Caco-2 (cell line): ENCODE measurements at regions of chr15 and their contacts with region 1.

Region 1: GRCh38 chr15:77907824-77908751 is 169.4 kb downstream of the TBC1D2B start:
- DNase-seq: peak; percentile 77 to 82
- H3K4me3 ChIP-seq: no peak overlapping the region
- H3K4me3 Mint-ChIP-seq: no peak overlapping the region
- H3K27ac Mint-ChIP-seq: no peak overlapping the region
- H3K4me1 ChIP-seq: 0 out of 2 replicates have a peak, but pooled peaks cover 3% of the 10 kb centered on the region
- H3K4me1 Mint-ChIP-seq: no peaks in the 10 kb centered on the region
- H3K27me3 ChIP-seq: no peaks in the 10 kb centered on the region
- H3K27me3 Mint-ChIP-seq: peaks cover 10% of the 10 kb centered on the region
- CTCF ChIP-seq: peak; percentile 54 to 74

Region 2: DNA sequence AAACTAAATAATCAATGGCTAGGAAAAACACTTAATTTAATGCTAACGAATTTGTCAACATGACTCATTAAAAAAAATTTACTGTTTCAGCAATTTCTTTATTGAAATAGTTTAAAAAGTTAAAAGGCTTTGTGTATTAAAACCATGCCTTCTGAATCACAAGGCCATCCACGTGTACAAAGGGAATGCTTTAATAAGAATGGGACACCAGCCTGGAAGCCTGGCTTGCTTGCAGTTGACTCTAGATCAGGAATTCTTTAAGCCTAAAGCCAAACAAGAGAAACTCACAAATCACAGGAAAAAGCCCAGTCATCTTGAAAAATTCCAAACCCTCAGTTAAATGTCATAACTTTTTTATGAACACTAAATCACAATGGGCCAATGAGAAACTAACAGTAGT is 625.8 kb before region 1 on chr15:
- CTCF ChIA-PET with region 1: no interaction called
- POLR2A ChIA-PET with region 1: no interaction called
- intact Hi-C with region 1: no loop called
- DNase-seq: no peak
- H3K4me3 ChIP-seq: no peak overlapping the region
- H3K4me3 Mint-ChIP-seq: no peak overlapping the region
- H3K27ac Mint-ChIP-seq: no peak overlapping the region
- H3K4me1 ChIP-seq: no peaks in the 10 kb centered on the region; the same call in 1 of the 2 replicates
- H3K4me1 Mint-ChIP-seq: no peaks in the 10 kb centered on the region
- H3K27me3 ChIP-seq: no peaks in the 10 kb centered on the region
- H3K27me3 Mint-ChIP-seq: no peaks in the 10 kb centered on the region
- CTCF ChIP-seq: no peak

Region 3: DNA sequence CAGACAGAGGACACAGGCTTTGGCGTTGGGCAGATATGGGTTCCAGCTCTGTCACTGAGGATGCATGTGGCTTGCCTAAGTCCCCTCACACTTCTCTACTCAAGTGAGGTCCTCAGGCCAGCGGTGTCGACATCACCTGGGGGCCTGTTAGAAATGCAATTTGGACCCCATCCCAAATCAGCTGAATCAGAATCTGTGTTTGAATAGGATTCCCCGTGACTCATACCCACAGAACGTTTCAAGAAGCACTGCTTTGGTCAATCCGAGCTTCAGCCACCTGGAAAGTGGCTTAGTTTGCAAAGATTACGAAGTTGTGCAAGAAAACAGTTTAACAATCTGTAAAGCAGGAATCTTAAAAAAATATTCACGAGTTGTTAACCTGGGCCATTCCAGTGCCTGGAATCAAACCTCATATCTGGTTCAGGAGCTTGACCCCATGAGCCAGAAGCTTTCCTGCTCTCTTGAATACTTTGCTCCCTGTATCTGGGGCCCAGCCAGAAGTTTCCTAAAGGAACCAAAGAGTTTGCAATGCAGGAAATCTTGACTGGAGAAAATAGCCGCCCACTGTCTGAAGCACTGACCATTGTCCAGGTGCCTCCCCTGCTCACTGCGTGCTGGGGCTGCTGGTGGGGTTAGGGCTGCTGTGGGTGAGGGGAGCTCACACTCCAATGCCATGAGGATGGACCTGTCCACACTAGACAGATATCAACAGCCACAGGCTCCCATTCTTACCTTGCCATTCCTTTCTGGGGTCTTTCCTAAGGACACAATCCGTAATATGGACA is 66.9 kb before region 1 on chr15:
- CTCF ChIA-PET with region 1: interaction called, 10 read pairs
- POLR2A ChIA-PET with region 1: no interaction called
- intact Hi-C with region 1: no loop called
- DNase-seq: no peak
- H3K4me3 ChIP-seq: no peak overlapping the region
- H3K4me3 Mint-ChIP-seq: no peak overlapping the region
- H3K27ac Mint-ChIP-seq: no peak overlapping the region
- H3K4me1 ChIP-seq: no peaks in the 10 kb centered on the region
- H3K4me1 Mint-ChIP-seq: no peaks in the 10 kb centered on the region
- H3K27me3 ChIP-seq: no peaks in the 10 kb centered on the region; the same call in 1 of the 2 replicates
- H3K27me3 Mint-ChIP-seq: peaks cover 9% of the 10 kb centered on the region
- CTCF ChIP-seq: no peak

Region 4: DNA sequence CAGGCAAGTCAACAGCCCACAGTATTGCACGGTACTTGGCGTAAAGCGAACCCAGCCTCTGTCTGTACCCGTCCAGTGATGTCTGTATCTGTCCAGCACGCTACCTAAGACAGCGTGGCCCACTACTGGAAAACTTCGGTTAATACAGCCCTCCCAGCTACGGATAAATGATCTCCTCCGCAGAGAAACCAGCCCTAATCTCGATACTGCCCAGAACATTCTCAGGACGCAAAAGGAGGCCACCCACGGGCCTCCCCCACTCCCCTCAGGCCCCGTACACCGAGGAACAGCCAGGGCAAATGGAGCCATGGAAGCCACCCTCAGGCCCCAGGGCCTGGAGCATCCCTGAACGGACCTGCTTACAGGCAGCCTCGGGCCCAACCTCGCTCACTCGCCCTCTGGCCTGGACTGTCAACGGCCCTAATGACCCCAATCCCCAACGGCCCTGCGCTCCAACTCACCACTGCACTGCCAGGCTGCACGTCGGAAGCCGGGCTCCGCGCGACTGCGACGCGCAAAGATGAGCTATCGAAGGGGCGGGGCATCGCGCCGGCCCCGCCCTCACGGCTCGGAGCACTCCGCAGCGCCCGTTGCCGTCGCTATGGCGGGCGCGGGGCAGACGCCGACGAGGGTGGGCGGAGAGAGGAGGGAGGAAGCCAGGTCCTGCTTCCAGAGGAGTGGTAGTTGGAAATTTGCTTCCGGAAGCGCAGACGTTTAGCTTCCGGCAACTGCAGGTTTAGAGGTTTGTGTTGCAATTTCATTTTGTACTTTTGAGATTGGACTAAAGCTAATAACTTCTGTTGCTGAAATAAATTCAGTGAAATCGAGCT is 391.2 kb after region 1 on chr15 and contains the start of gene SKIC8:
- CTCF ChIA-PET with region 1: no interaction called
- POLR2A ChIA-PET with region 1: no interaction called
- intact Hi-C with region 1: no loop called
- DNase-seq: peak; percentile 94
- H3K4me3 ChIP-seq: peak within 1 kb of the TSS; percentile 86
- H3K4me3 Mint-ChIP-seq: peak within 1 kb of the TSS; percentile 100
- H3K27ac Mint-ChIP-seq: peak within 1 kb of the TSS; percentile 98
- H3K4me1 ChIP-seq: 0 out of 2 replicates have a peak, but pooled peaks cover 4% of the 10 kb centered on the region
- H3K4me1 Mint-ChIP-seq: no peaks in the 10 kb centered on the region
- H3K27me3 ChIP-seq: no peaks in the 10 kb centered on the region
- H3K27me3 Mint-ChIP-seq: no peaks in the 10 kb centered on the region
- CTCF ChIP-seq: no peak
- total RNA-seq, gene SKIC8: 45.7 and 51.5 TPM in 2 replicates